ENCODE measurements at regions of chr18 and their contacts with region 1.

Region 1: DNA sequence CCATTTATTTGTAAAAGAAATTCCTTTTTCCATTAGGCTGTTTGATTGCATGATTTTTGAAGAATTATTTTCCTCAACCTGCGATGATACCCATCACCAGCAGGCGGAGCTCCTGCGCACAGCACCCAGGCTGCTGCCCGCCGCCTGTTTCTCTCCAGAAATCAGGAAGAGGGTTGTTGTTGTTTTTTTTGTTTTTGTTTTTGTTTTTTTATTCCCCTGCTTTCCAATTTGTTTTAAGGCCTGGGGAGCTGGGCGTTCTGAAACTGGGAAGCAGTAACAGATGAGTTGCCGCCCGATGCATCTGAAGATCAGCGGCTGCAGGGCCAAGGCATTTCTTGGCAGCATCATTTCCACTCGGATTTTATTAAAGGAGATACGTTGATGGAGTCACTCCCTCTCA is 132.1 kb downstream of the MBP start:
- DNase-seq: no peak

Region 2: GRCh38 chr18:77054606-77055428 is 54.3 kb after region 1 on chr18:
- intact Hi-C with region 1: loop called (anchors 5 kb)
- DNase-seq: peak; percentile 95

Region 3: GRCh38 chr18:77132371-77133050 is 132.0 kb after region 1 on chr18 and contains the start of gene MBP:
- intact Hi-C with region 1: loop called in 1 of 2 experiments (anchors 10 kb)
- DNase-seq: peak; percentile 88
- total RNA-seq, gene MBP: 41.6 to 42.1 TPM